RWPE1 (cell line): ENCODE measurements at regions of chr20 and their contacts with region 1.

Region 1: DNA sequence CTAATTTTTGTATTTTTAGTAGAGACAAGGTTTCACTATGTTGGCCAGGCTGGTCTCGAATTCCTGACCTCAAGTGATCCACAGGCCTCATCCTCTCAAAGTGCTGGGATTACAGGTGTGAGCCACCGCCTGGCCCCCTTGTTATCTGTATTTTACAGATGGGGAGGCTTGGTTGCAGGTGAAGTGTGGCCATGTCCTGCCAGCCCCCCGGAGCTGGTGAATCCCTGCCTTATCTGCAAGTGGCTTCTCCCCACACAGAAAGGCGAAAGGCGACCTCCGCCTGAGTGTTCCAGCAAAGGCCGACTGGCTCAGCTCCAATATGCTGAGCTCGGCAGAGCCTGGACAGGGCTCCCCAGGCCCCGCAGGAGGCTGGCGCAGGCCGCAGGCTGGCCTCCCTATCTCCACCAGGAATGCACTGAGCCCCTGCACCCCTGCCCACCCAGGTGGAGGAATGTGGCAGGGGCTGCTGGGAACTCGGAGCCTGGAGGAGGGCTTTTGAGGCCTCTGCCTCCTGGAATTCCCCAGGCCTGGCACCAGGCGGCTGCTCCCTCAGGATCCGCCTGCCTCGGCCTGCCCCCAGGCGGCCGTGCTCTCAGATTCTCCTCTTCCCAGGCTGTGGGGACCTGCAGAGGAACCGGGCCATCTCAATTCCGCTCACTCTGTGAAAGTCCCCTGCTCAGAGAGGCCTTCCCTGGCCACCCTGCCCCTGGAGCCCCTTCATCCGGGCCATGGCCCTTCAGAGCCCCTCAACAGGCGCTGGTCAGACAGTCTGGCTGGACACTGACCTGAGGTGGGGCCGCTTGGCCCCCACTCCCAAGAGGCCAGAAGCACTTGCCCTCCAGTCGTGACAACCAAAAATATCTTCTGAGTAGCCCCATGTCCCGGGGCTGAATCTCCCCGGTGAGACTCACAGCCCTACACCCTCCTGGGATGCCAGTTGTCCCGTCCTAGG is 9.3 kb upstream of the LAMA5 start:
- DNase-seq: no peak
- H3K27ac ChIP-seq: peak overlapping the region; percentile 100
- CTCF ChIP-seq: peak; percentile 80

Region 2: GRCh38 chr20:62168061-62168460 is 208.3 kb before region 1 on chr20:
- CTCF ChIA-PET with region 1: no interaction called
- POLR2A ChIA-PET with region 1: interaction called, 16 read pairs
- DNase-seq: no peak
- H3K27ac ChIP-seq: no peak overlapping the region
- CTCF ChIP-seq: no peak

Region 3: GRCh38 chr20:62362981-62363919 is 13.1 kb before region 1 on chr20:
- CTCF ChIA-PET with region 1: interaction called, 173 read pairs
- POLR2A ChIA-PET with region 1: interaction called, 67 read pairs
- DNase-seq: no peak
- H3K27ac ChIP-seq: peak overlapping the region; percentile 100
- CTCF ChIP-seq: no peak

Region 4: DNA sequence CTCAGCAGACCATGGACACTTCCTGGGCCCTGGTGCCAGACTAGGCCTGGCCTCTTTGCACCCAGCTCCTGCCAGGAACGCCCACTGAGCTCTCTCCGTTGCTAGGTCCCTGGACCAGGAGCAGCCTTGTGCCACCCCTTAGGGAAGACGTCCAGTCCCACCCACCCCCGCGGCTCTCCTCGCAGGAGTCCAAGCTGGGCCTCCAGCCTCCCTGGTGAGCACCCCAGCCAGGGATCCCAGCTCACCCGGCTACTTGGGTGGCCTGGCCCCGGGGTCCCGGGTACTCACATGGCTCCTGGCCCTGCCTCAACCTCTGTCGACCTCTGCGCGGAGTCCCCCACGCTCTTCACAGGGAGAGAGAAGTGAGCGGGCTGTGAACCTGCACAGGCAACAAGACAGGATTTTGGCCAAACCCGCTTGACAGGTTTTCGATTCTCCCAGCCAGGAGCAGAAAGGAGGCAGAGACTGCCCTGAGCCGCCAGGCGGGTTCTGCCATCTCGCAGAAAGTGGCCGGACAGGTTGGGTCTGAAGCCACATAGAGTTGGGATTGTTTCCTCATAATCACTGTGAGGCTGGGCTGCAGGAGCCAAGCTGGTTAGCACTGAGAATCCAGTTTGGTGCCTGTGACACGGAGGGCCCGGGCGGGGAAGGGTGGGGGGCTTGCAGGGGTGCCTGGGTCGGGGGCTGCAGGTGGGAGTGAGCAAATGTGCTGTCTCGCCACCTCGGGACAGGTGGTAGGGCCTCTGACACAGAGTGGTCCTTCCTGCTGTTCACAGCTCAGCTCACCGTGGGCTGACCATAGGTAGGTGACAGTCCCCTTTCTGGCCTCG is 51.0 kb after region 1 on chr20 and contains the start of gene RBBP8NL:
- CTCF ChIA-PET with region 1: no interaction called
- POLR2A ChIA-PET with region 1: no interaction called
- DNase-seq: peak; percentile 93
- H3K27ac ChIP-seq: no peak within 1 kb of the TSS
- CTCF ChIP-seq: no peak